Mammary epithelial cell (primary cell): ENCODE measurements at regions of chr1 and their contacts with region 1.

Region 1: DNA sequence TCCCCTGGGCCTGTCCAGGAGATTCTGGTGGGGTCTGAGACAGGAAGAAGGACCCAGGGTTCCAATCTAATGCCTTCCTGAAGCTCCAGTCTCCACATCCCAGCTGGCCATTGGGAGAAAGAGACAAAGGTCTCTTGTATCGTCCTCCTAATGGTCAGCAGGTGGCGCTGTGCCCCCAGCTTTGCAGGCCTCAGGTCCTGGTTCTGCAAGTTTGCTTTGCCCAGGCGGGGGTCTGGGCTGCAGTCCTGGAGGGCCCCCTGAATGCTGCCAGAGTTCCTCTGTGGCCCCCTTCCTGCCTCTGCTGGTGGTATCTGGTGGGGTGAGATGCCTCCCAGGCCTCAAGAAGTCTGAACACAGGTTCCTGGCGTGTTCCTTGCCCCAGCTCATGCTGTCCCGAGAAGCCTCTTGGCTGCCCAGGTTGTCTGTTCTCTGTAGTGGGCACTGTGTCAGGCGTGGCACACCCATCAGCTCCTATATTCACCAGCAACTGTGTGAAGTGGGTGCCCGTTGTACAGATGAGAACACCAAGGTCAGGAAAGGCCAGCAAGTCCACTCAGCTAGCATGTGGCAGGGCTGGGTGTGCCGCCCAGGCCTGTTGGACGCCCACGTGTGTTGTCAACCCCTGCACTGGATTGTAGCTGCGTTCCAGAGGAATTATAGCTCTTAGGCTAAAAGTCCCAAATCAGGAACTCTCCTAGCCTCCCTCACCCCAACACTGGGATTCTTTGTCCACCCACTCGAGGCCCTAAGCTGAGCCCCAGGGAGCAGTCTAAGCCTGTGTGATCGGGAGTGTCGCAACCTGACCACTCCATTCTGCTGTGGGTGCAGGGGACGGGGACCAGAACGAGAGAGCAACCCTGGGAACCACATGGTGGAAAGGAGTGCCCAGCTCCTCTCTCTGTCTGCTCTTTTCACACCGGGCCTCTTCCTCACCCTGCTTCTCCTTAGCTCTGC is 33.9 kb upstream of the CSF3R start:
- DNase-seq: peak; percentile 36
- H3K4me3 ChIP-seq: no peak overlapping the region
- H3K27ac ChIP-seq: no peak overlapping the region
- H3K4me1 ChIP-seq: peaks cover 22% of the 10 kb centered on the region
- H3K27me3 ChIP-seq: no peaks in the 10 kb centered on the region
- CTCF ChIP-seq: peak; percentile 89 to 95

Region 2: GRCh38 chr1:36350659-36351226 is 165.9 kb before region 1 on chr1:
- CTCF ChIA-PET with region 1: no interaction called
- dilution Hi-C with region 1: no loop called
- in situ Hi-C with region 1: no loop called
- intact Hi-C with region 1: no loop called
- DNase-seq: peak; percentile 74
- H3K4me3 ChIP-seq: no peak overlapping the region
- H3K27ac ChIP-seq: peak overlapping the region; percentile 87
- H3K4me1 ChIP-seq: peaks cover 52% of the 10 kb centered on the region
- H3K27me3 ChIP-seq: no peaks in the 10 kb centered on the region
- CTCF ChIP-seq: no peak

Region 3: DNA sequence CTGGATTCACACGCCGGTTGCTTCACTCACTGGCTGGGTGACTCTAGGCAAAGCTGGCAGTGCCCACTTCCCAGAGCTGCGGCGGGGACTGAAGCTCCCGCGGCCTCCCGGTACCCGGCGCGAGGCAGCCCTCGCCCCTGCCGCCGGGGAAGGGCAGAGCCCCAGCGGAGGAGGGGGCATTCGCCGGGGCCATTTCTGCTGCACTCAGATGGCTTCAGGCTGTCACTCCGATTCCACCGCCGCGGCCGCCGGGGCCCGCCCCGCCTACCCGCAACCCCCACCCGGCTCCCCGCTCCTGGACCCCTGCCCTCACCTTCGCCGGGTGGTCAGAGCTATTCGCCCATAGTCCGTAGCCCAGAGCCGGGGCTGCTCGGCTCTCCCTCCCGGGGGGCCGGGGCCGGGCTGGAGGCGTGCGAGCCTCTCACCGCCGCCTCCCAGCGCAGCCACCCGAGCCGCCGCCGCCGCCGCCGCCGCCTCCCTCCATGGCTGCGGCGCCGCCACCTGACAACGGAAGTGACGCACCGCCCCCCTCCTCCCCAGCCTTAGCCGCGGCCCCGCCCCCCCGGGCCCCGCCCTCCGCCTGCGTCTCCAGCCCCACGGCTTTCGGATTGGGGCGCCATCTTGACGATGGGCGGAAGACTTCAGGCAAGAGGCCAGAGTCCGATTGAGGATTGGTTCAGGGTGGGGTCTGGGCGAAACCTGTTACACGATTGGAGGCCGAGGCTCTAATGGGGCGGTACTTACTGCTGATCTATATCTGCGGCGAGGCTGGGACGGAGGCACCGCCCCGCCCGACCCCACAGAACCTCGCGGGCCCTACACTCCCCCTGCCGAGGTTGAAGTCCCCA is 131.0 kb before region 1 on chr1 and contains the start of gene STK40:
- CTCF ChIA-PET with region 1: no interaction called
- dilution Hi-C with region 1: no loop called
- in situ Hi-C with region 1: no loop called
- intact Hi-C with region 1: no loop called
- DNase-seq: peak; percentile 99
- H3K4me3 ChIP-seq: peak within 1 kb of the TSS; percentile 66 to 79 (median 70)
- H3K27ac ChIP-seq: peak within 1 kb of the TSS; percentile 100
- H3K4me1 ChIP-seq: peaks cover 31% of the 10 kb centered on the region
- H3K27me3 ChIP-seq: no peaks in the 10 kb centered on the region
- CTCF ChIP-seq: no peak
- total RNA-seq, gene STK40: 13.2 to 21.3 TPM

Region 4: DNA sequence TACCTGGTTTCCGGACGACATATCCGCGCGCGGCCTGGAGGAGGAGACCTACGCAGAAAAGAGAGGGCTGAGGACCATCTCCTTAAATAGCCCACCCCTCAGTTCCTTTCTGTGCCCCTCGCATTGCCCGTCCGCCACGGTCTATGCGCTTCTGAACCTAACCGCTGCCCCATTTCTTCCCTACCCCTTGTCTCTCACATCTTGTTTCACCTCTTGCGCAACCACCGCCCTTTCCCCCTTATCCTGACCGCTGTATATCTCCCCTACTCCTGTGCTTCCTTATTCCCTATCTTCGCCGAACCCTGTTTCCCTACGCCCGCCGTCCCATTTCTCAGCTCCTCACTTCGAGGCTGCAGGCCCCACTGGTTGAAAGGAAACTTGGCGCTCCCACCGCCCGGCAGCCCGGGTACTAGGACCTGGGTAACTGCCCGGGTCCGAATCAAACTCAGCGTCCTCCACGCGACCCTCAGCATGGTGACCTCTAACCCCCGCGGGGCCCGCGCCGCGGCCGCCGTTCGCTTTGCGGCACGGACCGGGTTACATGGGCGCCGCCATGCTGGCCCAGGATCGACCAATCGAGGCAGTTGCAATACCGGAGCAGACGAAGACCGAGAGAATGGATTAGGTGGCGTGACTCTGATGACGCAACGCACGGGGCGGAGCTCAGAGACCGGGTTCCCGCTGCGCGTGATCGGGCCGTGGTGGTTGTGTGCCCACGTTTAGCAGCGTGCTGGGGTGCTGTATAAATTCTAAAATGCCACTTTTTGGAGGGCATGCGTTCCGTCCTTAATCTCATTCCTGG is 52.6 kb before region 1 on chr1 and contains the start of gene MRPS15:
- CTCF ChIA-PET with region 1: no interaction called
- dilution Hi-C with region 1: no loop called
- in situ Hi-C with region 1: no loop called
- intact Hi-C with region 1: loop called (anchors 2 kb)
- DNase-seq: peak; percentile 93
- H3K4me3 ChIP-seq: peak within 1 kb of the TSS; percentile 79 to 80 (median 80)
- H3K27ac ChIP-seq: peak within 1 kb of the TSS; percentile 88
- H3K4me1 ChIP-seq: peaks cover 16% of the 10 kb centered on the region
- H3K27me3 ChIP-seq: no peaks in the 10 kb centered on the region
- CTCF ChIP-seq: peak in 1 of 2 donors; percentile 1
- total RNA-seq, gene MRPS15: 63.3 to 106 TPM

Region 5: GRCh38 chr1:36553591-36554322 is 37.1 kb after region 1 on chr1:
- CTCF ChIA-PET with region 1: no interaction called
- dilution Hi-C with region 1: no loop called
- in situ Hi-C with region 1: no loop called
- intact Hi-C with region 1: loop called (anchors 1 kb)
- DNase-seq: peak; percentile 41
- H3K4me3 ChIP-seq: no peak overlapping the region
- H3K27ac ChIP-seq: no peak overlapping the region
- H3K4me1 ChIP-seq: no peaks in the 10 kb centered on the region
- H3K27me3 ChIP-seq: no peaks in the 10 kb centered on the region
- CTCF ChIP-seq: peak; percentile 65 to 79

Region 6: GRCh38 chr1:36576118-36576517 is 59.5 kb after region 1 on chr1:
- CTCF ChIA-PET with region 1: no interaction called
- dilution Hi-C with region 1: no loop called
- in situ Hi-C with region 1: no loop called
- intact Hi-C with region 1: loop called (anchors 2 kb)
- DNase-seq: peak; percentile 12
- H3K4me3 ChIP-seq: no peak overlapping the region
- H3K27ac ChIP-seq: no peak overlapping the region
- H3K4me1 ChIP-seq: no peaks in the 10 kb centered on the region
- H3K27me3 ChIP-seq: no peaks in the 10 kb centered on the region
- CTCF ChIP-seq: peak; percentile 79 to 95

Region 7: GRCh38 chr1:37323486-37324377 is 807.1 kb after region 1 on chr1:
- CTCF ChIA-PET with region 1: no interaction called
- dilution Hi-C with region 1: no loop called
- in situ Hi-C with region 1: no loop called
- intact Hi-C with region 1: loop called (anchors 1 kb)
- DNase-seq: peak; percentile 11
- H3K4me3 ChIP-seq: no peak overlapping the region
- H3K27ac ChIP-seq: no peak overlapping the region
- H3K4me1 ChIP-seq: no peaks in the 10 kb centered on the region
- H3K27me3 ChIP-seq: peaks cover 2% of the 10 kb centered on the region
- CTCF ChIP-seq: peak; percentile 79 to 88

Region 8: DNA sequence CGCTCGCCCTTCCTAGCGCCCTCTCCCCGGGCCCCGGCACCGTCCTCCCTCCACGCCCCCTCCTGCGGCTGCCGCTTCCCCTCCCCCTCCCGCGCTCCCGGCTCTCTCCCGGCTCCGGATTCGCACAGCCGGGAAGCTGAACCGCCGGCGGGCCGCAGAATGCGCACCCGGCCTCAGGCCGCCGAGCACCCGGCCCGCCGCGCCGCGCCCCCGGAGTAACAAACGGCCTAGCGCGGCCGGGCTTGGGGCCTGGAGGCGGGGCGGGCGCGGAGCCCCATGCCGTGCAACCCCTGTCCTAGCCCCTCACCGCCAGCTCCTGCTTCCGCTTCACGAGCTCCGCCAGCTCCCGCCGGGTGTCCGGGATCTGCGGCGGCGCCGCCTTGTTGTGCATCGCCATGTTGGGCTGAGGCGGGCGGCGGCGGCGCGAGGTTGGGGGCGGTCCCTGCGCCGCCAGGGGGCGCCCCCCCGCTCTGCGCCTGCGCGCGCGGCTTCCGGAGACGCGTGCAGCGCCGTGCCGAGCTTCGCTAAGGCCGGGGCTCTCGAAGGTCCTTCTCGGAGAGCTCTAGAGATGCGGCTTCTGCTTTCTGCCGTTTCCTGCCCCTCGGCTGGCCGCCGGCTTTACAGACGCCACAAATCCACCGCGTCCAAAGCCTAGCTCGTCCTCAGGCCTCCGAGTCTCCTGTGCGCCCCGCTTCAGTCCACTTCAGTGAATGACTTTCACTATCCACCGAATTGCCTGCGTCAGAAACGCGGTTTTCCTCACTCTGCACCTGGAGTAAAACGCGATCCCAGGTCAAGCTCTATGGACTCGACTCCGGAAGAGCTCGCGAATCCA is 997.9 kb after region 1 on chr1 and contains the start of gene MEAF6:
- CTCF ChIA-PET with region 1: no interaction called
- dilution Hi-C with region 1: loop called (anchors 5 kb)
- in situ Hi-C with region 1: no loop called
- intact Hi-C with region 1: no loop called
- DNase-seq: peak; percentile 77
- H3K4me3 ChIP-seq: peak within 1 kb of the TSS; percentile 86 to 98 (median 87)
- H3K27ac ChIP-seq: peak within 1 kb of the TSS; percentile 92
- H3K4me1 ChIP-seq: peaks cover 14% of the 10 kb centered on the region
- H3K27me3 ChIP-seq: no peaks in the 10 kb centered on the region
- CTCF ChIP-seq: peak; percentile 36 to 44
- total RNA-seq, gene MEAF6: 61.5 to 64.9 TPM